GM10248 (cell line): ENCODE measurements at regions of chr19 and their contacts with region 1.

Region 1: GRCh38 chr19:10717356-10718204 is at the start of gene DNM2:
- DNase-seq: peak; percentile 97
- CTCF ChIP-seq: peak; percentile 73

Region 2: DNA sequence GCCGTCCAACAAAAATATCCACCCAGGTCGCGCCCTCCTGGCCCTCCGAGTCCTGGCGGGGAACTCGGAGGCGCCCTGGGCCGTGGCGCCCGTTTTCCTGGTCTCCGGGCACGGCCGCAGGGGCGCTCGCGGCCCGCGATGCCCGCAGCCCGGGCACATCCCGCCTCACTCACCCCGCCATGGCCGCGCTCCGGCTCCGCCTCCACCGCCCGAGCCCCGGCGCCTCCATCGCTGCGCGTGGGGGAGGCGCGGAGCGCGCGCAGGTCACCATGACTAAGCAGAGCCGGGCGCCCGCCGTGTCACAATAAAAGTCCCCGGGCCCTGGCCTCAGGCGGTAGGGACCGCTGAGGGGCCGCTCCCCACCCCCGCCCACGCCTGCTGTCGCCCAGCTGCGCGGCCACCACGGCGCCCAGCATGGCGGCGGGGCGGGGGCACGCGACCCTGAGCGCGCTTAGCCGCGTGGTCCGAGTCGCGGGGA is 215.0 kb before region 1 on chr19:
- CTCF ChIA-PET with region 1: no interaction called
- POLR2A ChIA-PET with region 1: no interaction called
- DNase-seq: peak; percentile 96
- CTCF ChIP-seq: no peak

Region 3: DNA sequence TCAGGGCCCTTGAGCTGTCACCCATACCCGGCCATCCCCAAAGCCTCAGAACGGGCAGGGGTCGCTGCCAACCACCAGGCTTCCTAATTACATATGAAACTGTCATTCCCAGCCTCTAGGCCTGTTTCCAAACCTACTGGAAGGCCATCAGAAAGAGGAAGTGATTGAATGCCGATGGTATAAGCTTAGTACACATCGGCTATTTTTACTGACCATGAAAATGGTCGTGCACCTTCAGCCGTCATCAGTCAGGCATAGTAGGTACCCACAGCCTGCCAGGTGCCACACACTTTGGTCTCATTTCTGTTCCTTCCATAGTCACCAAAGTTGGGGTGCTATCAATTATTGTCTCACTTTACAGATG is 162.0 kb before region 1 on chr19:
- CTCF ChIA-PET with region 1: no interaction called
- POLR2A ChIA-PET with region 1: no interaction called
- DNase-seq: no peak
- CTCF ChIP-seq: no peak

Region 4: DNA sequence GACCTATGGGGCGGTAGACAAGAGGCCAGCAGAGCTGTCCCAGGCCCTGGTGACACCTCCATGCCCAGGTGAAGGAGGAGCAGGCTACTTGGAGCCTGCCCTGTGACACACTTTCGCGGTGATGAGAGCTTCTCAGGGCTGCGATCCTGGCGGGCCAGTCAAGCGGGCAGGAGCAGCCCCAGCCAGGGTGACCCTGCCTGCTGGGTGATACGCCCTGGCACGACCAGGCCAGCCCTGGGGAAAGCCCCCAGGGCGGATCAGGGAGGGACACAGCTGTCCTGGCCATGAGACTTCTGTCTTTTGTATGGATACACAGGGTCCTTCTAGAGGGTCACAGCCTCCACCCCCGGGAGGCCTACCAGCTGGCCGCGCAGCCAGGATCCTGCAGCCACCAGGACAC is 13.3 kb after region 1 on chr19:
- CTCF ChIA-PET with region 1: interaction called, 12 read pairs
- POLR2A ChIA-PET with region 1: interaction called, 5 read pairs
- DNase-seq: no peak
- CTCF ChIP-seq: no peak

Region 5: DNA sequence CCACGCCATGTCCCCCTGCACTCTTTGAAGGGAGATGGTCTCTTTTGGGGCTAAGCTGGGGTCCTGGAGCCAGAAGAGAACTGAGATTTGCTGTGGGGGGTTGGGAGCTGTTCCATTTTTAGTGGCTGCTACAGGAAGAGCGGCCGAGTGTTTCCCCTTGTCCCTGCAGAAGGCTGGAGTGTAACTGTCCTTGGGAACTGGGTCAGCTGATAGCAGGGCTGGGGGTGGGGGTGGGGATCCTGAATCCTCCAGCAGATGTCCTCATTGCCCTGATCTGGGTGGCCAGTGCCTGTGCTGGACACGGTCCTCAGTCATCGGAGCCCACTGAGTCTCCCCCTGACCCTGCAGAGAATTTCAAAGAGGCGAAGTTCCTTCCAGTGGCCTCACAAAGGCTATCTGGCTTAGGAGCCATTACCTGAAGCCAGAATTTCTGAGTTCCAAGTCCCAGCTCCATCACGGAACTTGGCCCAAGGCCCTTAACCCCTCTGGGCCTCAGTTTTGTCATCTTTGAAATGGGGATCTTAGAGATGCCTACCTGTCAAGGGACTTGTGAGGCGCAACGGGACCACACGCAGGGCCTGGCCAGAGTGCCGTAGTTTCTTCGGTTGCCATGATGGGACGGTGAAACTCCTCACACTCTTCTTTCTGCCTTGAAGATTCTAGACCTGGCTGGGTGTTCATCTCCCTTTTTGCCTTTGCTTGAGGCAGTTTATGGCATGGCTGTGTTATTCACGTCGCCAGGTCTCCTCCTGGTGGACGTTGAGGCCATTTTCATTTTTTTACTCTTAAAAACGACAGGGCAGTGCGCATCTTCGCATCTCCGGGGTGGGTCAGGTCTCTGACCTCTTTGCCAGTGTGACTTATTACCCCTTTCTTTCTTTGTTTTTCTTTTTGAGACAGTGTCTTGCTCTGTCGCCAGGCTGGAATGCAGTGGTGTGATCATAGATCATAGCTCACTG is 52.2 kb after region 1 on chr19:
- CTCF ChIA-PET with region 1: interaction called, 11 read pairs
- POLR2A ChIA-PET with region 1: no interaction called
- DNase-seq: no peak
- CTCF ChIP-seq: no peak

Region 6: GRCh38 chr19:10858204-10858828 is 140.7 kb after region 1 on chr19:
- CTCF ChIA-PET with region 1: interaction called, 107 read pairs
- POLR2A ChIA-PET with region 1: interaction called, 5 read pairs
- DNase-seq: peak; percentile 48
- CTCF ChIP-seq: peak; percentile 77

Region 7: GRCh38 chr19:10870955-10871603 is 153.5 kb after region 1 on chr19 and contains the start of gene CARM1:
- CTCF ChIA-PET with region 1: interaction called, 107 read pairs
- POLR2A ChIA-PET with region 1: no interaction called
- DNase-seq: peak; percentile 100
- CTCF ChIP-seq: peak; percentile 98